ENCODE measurements at regions of chr3 and their contacts with region 1.

Region 1: DNA sequence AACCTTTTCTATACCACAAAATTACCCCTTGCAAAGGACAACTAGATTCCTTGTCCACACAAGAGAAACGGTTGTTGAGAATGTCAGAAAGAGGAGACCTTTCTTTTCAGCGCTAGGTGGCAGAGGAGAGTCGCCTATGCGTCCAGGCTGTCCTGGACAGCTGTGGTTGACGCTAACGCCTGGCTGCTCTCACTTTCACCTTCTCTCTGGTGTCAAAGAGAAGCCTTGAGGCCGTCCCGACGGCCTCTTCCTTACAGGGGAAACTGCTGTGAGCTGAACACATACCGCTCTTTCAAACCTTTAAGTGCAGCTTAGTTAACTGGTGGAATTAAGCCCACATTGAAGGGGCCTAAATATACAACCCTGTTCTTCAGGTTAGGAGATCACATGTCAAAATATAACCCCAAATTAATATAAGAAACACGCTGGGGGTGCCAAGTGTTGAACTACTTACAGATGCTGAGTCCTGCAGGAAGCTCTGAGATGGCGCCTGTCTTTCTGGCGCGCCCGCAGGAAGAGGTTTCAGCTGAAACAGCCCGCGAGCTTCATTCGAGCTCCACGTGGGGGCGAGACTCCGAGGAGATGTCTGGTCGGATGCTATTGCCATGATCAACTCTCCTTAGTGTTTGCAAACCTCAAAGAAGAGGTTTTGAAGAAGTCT is 26.1 kb upstream of the KBTBD8 start:
- DNase-seq: peak; percentile 52 to 55
- ATAC-seq: peak; percentile 98 to 99
- H3K4me3 ChIP-seq: peak overlapping the region; percentile 36
- H3K27ac ChIP-seq: no peak overlapping the region
- H3K4me1 ChIP-seq: no peaks in the 10 kb centered on the region
- CTCF ChIP-seq: peak; percentile 67
- EP300 ChIP-seq: no peak
- POLR2A ChIP-seq: no peak
- RAD21 ChIP-seq: peak; percentile 64 to 65

Region 2: GRCh38 chr3:66615643-66616301 is 356.2 kb before region 1 on chr3:
- CTCF ChIA-PET with region 1: no interaction called
- POLR2A ChIA-PET with region 1: no interaction called
- DNase-seq: no peak
- ATAC-seq: no peak
- H3K4me3 ChIP-seq: no peak overlapping the region
- H3K27ac ChIP-seq: no peak overlapping the region
- H3K4me1 ChIP-seq: no peaks in the 10 kb centered on the region
- CTCF ChIP-seq: no peak
- EP300 ChIP-seq: no peak
- POLR2A ChIP-seq: no peak
- RAD21 ChIP-seq: no peak

Region 3: GRCh38 chr3:66989860-66990665 is 18.0 kb after region 1 on chr3:
- CTCF ChIA-PET with region 1: interaction called, 28 read pairs
- POLR2A ChIA-PET with region 1: no interaction called
- DNase-seq: peak; percentile 12 to 63
- ATAC-seq: peak; percentile 64 to 76; a peak in 4 of 6 replicates
- H3K4me3 ChIP-seq: no peak overlapping the region
- H3K27ac ChIP-seq: no peak overlapping the region
- H3K4me1 ChIP-seq: no peaks in the 10 kb centered on the region
- CTCF ChIP-seq: no peak
- EP300 ChIP-seq: no peak
- POLR2A ChIP-seq: no peak
- RAD21 ChIP-seq: no peak

Region 4: DNA sequence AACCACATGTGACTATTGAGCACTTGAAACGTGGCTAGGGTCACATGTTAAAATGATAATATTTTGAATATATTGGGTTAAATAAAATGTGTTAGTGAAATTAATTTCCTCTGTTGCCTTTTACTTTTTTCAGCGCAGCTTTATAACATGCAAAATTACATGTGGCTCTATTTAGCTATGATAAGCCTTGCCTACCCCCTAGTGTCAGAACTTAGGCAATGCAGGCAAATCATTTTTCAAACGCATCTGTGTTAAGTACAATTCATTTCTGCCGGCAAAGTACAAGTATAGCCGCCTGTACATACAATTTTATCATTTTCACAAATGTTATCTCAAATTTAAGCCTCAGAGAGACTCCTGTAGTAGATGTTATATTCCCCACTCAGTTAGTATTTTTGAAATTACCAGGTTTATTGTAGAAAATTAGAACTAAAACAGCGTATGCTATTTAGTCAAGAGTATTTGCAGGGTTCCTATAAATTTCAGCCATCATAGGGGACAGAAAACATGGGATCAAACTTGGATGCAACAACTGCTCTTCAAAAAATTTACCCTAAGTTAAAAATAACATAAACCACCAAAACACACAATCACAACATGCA is 1904.2 kb after region 1 on chr3:
- CTCF ChIA-PET with region 1: interaction called, 28 read pairs
- POLR2A ChIA-PET with region 1: no interaction called
- DNase-seq: peak; percentile 3 to 66
- ATAC-seq: peak in 1 of 2 experiments; percentile 81; a peak in 3 of 6 replicates
- H3K4me3 ChIP-seq: no peak overlapping the region
- H3K27ac ChIP-seq: no peak overlapping the region
- H3K4me1 ChIP-seq: no peaks in the 10 kb centered on the region
- CTCF ChIP-seq: peak; percentile 72
- EP300 ChIP-seq: no peak
- POLR2A ChIP-seq: no peak
- RAD21 ChIP-seq: peak; percentile 78 to 86